HAP-1 (cell line): ENCODE measurements at regions of chr1 and their contacts with region 1.

Region 1: GRCh38 chr1:112715264-112716053 is at the start of gene PPM1J:
- DNase-seq: peak; percentile 88 to 99
- H3K4me3 ChIP-seq: peak within 1 kb of the TSS; percentile 35
- H3K4me1 ChIP-seq: peaks cover 4% of the 10 kb centered on the region
- H3K27me3 ChIP-seq: peaks cover 26% of the 10 kb centered on the region

Region 2: DNA sequence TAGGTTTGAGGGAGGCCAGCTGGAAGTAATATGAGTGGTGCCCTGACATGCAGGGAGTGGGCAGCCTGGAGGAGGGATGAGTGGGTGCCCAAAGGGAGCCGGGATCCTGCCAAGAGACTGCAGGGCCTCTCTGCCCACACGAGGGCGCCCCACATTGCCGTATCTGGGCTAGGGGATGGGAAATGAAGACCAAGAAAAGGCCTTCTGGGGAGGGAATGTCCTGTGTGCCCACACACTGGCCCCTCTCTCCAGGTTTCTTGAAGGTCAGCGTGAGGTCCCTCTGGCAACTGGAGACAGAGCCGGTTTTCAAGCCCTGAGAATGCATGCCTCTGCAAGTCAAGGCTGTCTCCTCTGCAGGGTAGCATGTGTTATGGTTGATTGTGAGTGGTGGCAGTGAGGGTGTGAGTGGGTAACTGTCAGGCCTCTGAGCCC is 93.8 kb after region 1 on chr1:
- in situ Hi-C with region 1: loop called (anchors 5 kb)
- DNase-seq: peak; percentile 67 to 91
- H3K4me3 ChIP-seq: no peak overlapping the region
- H3K4me1 ChIP-seq: peaks cover 5% of the 10 kb centered on the region; the same call in 1 of the 2 replicates
- H3K27me3 ChIP-seq: peaks cover 16% of the 10 kb centered on the region

Region 3: DNA sequence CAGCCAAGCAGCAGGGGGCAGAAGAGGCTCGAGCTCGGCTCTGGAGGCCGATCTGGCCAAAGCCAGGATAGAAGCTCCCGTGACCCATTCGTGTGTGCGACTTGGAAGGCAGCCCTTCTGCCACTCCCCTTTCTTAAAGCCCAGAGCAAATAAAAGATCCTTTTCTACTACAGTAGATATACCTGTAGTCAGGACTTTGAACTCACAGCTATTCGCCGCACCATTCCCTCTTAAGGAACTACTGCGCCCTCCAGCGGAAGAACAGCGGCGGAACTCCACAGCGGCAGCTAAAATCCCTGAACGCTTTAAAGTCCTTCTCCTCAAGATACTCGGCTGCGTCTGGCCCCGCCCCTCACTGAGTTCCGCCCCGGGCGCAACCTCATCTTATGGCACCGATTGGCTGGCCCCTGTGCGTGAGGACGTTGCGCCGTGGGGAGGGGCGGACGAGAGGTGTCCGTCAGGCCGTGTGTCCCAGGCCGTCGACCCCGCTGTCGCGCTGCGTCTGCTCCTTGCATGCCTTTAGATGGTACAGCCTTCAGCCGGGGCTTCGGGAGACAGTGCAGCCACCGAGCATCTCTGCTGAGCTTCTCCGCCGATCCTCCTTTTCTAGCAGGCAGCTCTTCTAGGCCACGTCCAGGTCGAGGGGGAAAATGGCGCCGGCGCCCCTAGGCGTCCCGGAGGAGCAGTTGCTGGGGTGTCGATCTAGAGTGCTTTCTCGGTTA is 357.5 kb after region 1 on chr1 and contains the start of gene LRIG2:
- in situ Hi-C with region 1: loop called (anchors 10 kb)
- DNase-seq: peak; percentile 98 to 99
- H3K4me3 ChIP-seq: peak within 1 kb of the TSS; percentile 88
- H3K4me1 ChIP-seq: peaks cover 14% of the 10 kb centered on the region
- H3K27me3 ChIP-seq: no peaks in the 10 kb centered on the region